Heart left ventricle (tissue), 16 donors: ENCODE measurements at regions of chr4 and their contacts with region 1.

Region 1: GRCh38 chr4:75673027-75673958 is at the start of gene G3BP2:
- DNase-seq: peak; percentile 98 to 99 (median 99)
- ATAC-seq: peak; percentile 99 to 100 (median 99)
- H3K4me3 ChIP-seq: peak within 1 kb of the TSS; percentile 74 to 100 (median 83)
- H3K27ac ChIP-seq: peak within 1 kb of the TSS; percentile 83 to 99 (median 96)
- H3K4me1 ChIP-seq: peaks cover 0 to 47% (median 31%) of the 10 kb centered on the region in 12 donors
- H3K27me3 ChIP-seq: no peaks in the 10 kb centered on the region
- CTCF ChIP-seq: peak in 1 of 12 donors; percentile 8
- POLR2A ChIP-seq: peak; percentile 69 to 87
- total RNA-seq, gene G3BP2: 70.8 to 126 (median 87.6) TPM

Region 2: DNA sequence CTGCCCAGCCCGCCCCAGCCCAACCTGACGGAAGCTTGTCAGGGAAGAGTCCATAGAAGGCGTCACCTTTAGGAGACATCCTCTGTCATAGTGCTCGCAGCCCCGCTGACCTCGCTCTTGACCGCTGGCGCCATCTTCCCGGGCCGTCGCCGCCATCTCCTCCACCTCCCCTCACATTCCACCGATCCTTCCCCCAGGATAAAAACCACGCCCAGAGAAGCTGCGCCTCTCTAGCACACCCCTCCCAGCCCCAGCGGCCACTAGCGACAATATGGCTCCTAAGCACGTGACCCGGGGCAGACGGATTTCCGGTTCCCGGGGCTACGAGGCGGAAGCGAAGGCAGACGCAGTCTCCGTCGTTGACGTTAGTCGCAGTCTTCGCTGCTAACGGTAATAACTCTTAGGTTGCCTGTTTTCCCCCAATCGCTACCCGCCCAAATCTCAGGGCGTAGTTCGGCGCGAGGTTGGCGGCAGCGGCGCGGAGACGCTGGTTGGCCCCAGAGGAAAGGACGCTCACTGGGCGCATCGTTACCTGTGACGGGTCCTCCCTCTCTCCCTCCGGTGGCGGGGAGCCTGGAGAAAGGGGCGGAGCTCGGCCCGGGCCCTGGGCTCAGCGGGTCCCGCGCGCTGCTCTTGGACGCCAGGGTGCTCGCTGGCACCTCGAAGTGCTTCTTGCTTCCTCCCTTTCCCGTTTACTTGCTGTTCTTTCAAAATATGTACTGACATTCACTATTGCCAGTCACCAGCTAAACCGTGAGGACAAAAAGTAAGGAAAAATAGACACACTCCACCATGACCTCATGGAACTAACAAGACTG is 159.0 kb before region 1 on chr4 and contains the starts of genes RCHY1 and THAP6:
- intact Hi-C with region 1: loop called in 2 of 10 experiments (anchors 5 to 10 kb)
- DNase-seq: peak; percentile 96 to 98 (median 96)
- ATAC-seq: peak; percentile 98
- H3K4me3 ChIP-seq: peak within 1 kb of the TSS; percentile 45 to 88 (median 76)
- H3K27ac ChIP-seq: peak within 1 kb of the TSS; percentile 33 to 99 (median 96)
- H3K4me1 ChIP-seq: peaks cover 0 to 61% (median 39%) of the 10 kb centered on the region in 12 donors
- H3K27me3 ChIP-seq: no peaks in the 10 kb centered on the region
- CTCF ChIP-seq: peak in 3 of 12 donors; percentile 7 to 38 (median 18)
- POLR2A ChIP-seq: peak in 1 of 2 donors; percentile 83
- total RNA-seq, gene RCHY1: 24.1 to 54.1 (median 41.9) TPM
- total RNA-seq, gene THAP6: 10.9 to 22.6 (median 16.3) TPM

Region 3: GRCh38 chr4:75598390-75598789 is 74.9 kb before region 1 on chr4:
- intact Hi-C with region 1: no loop called
- DNase-seq: no peak
- ATAC-seq: no peak
- H3K4me3 ChIP-seq: no peak overlapping the region
- H3K27ac ChIP-seq: no peak overlapping the region
- H3K4me1 ChIP-seq: no peaks in the 10 kb centered on the region
- H3K27me3 ChIP-seq: no peaks in the 10 kb centered on the region
- CTCF ChIP-seq: no peak
- POLR2A ChIP-seq: no peak

Region 4: DNA sequence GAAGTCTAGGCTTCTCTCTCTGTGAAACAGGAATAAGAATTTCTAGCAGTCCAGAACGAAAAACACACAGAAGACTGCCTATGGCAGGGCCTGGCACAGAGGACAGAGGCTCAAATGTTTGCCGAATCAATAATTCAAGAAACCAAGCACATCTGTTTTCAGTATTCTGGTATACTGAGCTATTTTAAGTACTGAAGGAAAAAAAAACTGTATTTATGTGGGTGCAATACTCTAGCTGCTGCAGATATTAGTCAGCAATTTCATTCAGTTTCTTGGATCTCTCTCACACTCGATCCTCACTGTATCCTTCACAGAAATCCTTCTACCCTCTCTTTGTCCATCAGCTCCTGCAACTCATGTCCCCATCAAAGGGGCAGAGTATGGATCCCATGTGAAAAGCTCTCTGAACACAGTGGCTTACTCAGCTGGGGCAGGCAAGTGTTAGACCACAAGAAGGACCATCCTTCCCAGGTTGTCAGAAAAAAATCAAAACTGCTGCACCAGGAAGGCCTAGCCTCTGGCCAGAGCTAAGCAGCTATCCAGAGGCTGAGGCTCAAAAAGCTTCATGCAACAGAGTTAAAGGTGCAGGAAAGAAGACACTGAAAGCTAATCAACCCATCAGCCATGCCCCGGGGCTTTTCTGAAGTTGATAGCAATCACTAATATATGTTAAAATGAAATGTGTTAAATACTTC is 42.0 kb after region 1 on chr4:
- intact Hi-C with region 1: loop called in 3 of 10 experiments (anchors 5 kb)
- DNase-seq: no peak
- ATAC-seq: no peak
- H3K4me3 ChIP-seq: no peak overlapping the region
- H3K27ac ChIP-seq: peak overlapping the region in 3 of 12 donors; percentile 24 to 32 (median 32)
- H3K4me1 ChIP-seq: peaks cover 0 to 24% (median 11%) of the 10 kb centered on the region in 12 donors
- H3K27me3 ChIP-seq: no peaks in the 10 kb centered on the region
- CTCF ChIP-seq: no peak
- POLR2A ChIP-seq: no peak

Region 5: DNA sequence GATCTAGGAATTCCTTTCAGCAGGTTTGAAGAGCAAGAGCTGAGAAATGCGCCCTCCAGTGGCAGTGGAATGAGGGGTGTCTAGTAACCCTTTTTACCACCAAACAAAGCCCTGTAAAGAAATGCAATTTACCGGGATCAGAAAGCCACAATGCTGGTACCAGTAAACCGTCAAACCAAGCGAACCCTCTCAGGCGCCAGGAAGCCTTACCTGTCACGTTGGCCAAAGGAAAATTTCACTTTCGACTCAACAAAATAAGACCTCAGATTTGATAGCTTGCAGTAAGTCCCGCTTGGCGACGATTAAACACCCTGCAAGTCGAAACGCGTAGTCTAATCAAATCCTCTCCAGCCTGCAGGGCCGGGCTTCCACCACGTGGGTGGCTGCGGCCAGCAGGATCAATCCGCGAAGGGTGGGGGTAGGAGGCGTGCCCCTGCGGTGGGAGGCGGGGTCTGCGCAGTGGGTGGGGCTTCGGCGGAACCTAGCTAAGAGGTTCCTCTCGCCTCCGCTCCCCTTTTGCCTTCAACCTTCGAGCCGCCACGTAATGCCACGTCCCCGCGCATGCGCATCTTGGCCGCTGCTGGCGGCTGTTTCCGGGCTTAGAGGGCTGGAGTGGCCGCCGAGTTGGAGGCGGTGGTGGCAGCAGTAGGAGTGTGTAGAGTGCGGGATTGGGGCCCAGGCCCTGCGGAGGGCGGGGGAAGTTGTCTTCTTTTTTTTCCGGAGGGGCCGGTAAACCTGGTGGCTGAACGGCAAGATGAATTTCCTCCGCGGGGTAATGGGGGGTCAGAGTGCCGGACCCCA is 51.0 kb after region 1 on chr4 and contains the start of gene USO1:
- intact Hi-C with region 1: loop called (anchors 1 to 5 kb)
- DNase-seq: peak; percentile 98 to 99 (median 99)
- ATAC-seq: peak; percentile 97 to 99 (median 98)
- H3K4me3 ChIP-seq: peak within 1 kb of the TSS; percentile 58 to 99 (median 94)
- H3K27ac ChIP-seq: peak within 1 kb of the TSS; percentile 92 to 99 (median 96)
- H3K4me1 ChIP-seq: peaks cover 0 to 59% (median 32%) of the 10 kb centered on the region in 12 donors
- H3K27me3 ChIP-seq: no peaks in the 10 kb centered on the region
- CTCF ChIP-seq: peak; percentile 41 to 77 (median 67)
- POLR2A ChIP-seq: peak; percentile 75 to 93
- total RNA-seq, gene USO1: 71.8 to 87.1 (median 77.3) TPM

Region 6: GRCh38 chr4:75844151-75844662 is 170.9 kb after region 1 on chr4:
- intact Hi-C with region 1: loop called in 1 of 10 experiments (anchors 10 kb)
- DNase-seq: no peak
- ATAC-seq: no peak
- H3K4me3 ChIP-seq: no peak overlapping the region
- H3K27ac ChIP-seq: peak overlapping the region in 3 of 12 donors; percentile 9 to 18 (median 18)
- H3K4me1 ChIP-seq: peaks cover 0 to 19% (median 9%) of the 10 kb centered on the region in 12 donors
- H3K27me3 ChIP-seq: no peaks in the 10 kb centered on the region
- CTCF ChIP-seq: no peak
- POLR2A ChIP-seq: no peak